OCI-LY7 (cell line): ENCODE measurements at regions of chr12 and their contacts with region 1.

Region 1: GRCh38 chr12:63843721-63844390 is 644 bp upstream of the SRGAP1 start:
- DNase-seq: peak; percentile 82
- H3K4me3 ChIP-seq: peak overlapping the region; percentile 61
- H3K27ac ChIP-seq: no peak overlapping the region
- H3K4me1 ChIP-seq: no peaks in the 10 kb centered on the region
- CTCF ChIP-seq: peak; percentile 77

Region 2: GRCh38 chr12:63955831-63956609 is 112.2 kb after region 1 on chr12:
- CTCF ChIA-PET with region 1: no interaction called
- POLR2A ChIA-PET with region 1: no interaction called
- intact Hi-C with region 1: loop called (anchors 10 kb)
- DNase-seq: no peak
- H3K4me3 ChIP-seq: no peak overlapping the region
- H3K27ac ChIP-seq: no peak overlapping the region
- H3K4me1 ChIP-seq: no peaks in the 10 kb centered on the region
- CTCF ChIP-seq: no peak

Region 3: GRCh38 chr12:64181504-64182291 is 337.8 kb after region 1 on chr12:
- CTCF ChIA-PET with region 1: no interaction called
- POLR2A ChIA-PET with region 1: no interaction called
- intact Hi-C with region 1: loop called (anchors 5 kb)
- DNase-seq: no peak
- H3K4me3 ChIP-seq: no peak overlapping the region
- H3K27ac ChIP-seq: no peak overlapping the region
- H3K4me1 ChIP-seq: no peaks in the 10 kb centered on the region
- CTCF ChIP-seq: peak; percentile 61